ENCODE measurements at regions of chr6 and their contacts with region 1.

Region 1: GRCh38 chr6:52995913-52996645 is 995 bp upstream of the GSTA4 start:
- DNase-seq: peak; percentile 49
- H3K4me3 Mint-ChIP-seq: peak overlapping the region; percentile 95
- H3K27ac Mint-ChIP-seq: peak overlapping the region; percentile 99
- H3K4me1 Mint-ChIP-seq: peaks cover 31% of the 10 kb centered on the region
- H3K27me3 Mint-ChIP-seq: peaks cover 5% of the 10 kb centered on the region

Region 2: GRCh38 chr6:52670502-52671409 is 325.3 kb before region 1 on chr6 and contains the start of gene TMEM14A:
- CTCF ChIA-PET with region 1: no interaction called
- POLR2A ChIA-PET with region 1: no interaction called
- intact Hi-C with region 1: loop called (anchors 10 kb)
- DNase-seq: peak; percentile 95
- H3K4me3 Mint-ChIP-seq: peak within 1 kb of the TSS; percentile 84
- H3K27ac Mint-ChIP-seq: peak within 1 kb of the TSS; percentile 52
- H3K4me1 Mint-ChIP-seq: peaks cover 39% of the 10 kb centered on the region
- H3K27me3 Mint-ChIP-seq: no peaks in the 10 kb centered on the region
- total RNA-seq, gene TMEM14A: 16.8 to 19.3 TPM

Region 3: DNA sequence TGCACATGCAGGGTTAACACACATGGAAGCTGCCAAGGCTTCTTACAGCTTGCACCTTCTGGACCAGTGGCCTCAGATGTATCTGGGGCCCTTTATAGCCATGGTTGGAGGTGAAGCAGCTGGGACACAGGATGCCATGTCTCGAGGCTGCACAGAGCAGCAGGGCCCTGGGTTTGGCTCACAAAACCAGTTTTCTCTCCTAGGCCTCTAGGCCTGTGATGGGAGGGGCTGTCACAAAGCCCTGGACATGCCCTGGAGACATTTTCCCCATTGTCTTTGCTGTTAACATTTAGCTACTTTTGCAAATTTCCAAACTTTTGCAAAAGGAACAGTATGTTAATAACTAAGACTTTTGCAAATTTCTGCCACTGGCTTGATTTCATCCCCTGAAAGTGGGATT is 174.2 kb before region 1 on chr6:
- CTCF ChIA-PET with region 1: no interaction called
- POLR2A ChIA-PET with region 1: no interaction called
- intact Hi-C with region 1: no loop called
- DNase-seq: no peak
- H3K4me3 Mint-ChIP-seq: no peak overlapping the region
- H3K27ac Mint-ChIP-seq: no peak overlapping the region
- H3K4me1 Mint-ChIP-seq: no peaks in the 10 kb centered on the region
- H3K27me3 Mint-ChIP-seq: no peaks in the 10 kb centered on the region

Region 4: GRCh38 chr6:52937908-52938307 is 58.2 kb before region 1 on chr6:
- CTCF ChIA-PET with region 1: no interaction called
- POLR2A ChIA-PET with region 1: no interaction called
- intact Hi-C with region 1: no loop called
- DNase-seq: no peak
- H3K4me3 Mint-ChIP-seq: no peak overlapping the region
- H3K27ac Mint-ChIP-seq: no peak overlapping the region
- H3K4me1 Mint-ChIP-seq: no peaks in the 10 kb centered on the region
- H3K27me3 Mint-ChIP-seq: peaks cover 2% of the 10 kb centered on the region

Region 5: GRCh38 chr6:52976591-52977035 is 19.5 kb before region 1 on chr6:
- CTCF ChIA-PET with region 1: interaction called, 49 read pairs
- POLR2A ChIA-PET with region 1: interaction called, 4 read pairs
- intact Hi-C with region 1: loop called (anchors 1 kb)
- DNase-seq: peak; percentile 66
- H3K4me3 Mint-ChIP-seq: peak overlapping the region; percentile 10
- H3K27ac Mint-ChIP-seq: peak overlapping the region; percentile 84
- H3K4me1 Mint-ChIP-seq: peaks cover 43% of the 10 kb centered on the region
- H3K27me3 Mint-ChIP-seq: peaks cover 14% of the 10 kb centered on the region

Region 6: GRCh38 chr6:53064726-53065215 is 68.7 kb after region 1 on chr6:
- CTCF ChIA-PET with region 1: interaction called, 17 read pairs
- POLR2A ChIA-PET with region 1: interaction called, 3 read pairs
- intact Hi-C with region 1: no loop called
- DNase-seq: peak; percentile 98
- H3K4me3 Mint-ChIP-seq: peak overlapping the region; percentile 100
- H3K27ac Mint-ChIP-seq: peak overlapping the region; percentile 97
- H3K4me1 Mint-ChIP-seq: peaks cover 52% of the 10 kb centered on the region
- H3K27me3 Mint-ChIP-seq: no peaks in the 10 kb centered on the region

Region 7: GRCh38 chr6:53095716-53096115 is 99.6 kb after region 1 on chr6:
- CTCF ChIA-PET with region 1: no interaction called
- POLR2A ChIA-PET with region 1: no interaction called
- intact Hi-C with region 1: no loop called
- DNase-seq: no peak
- H3K4me3 Mint-ChIP-seq: no peak overlapping the region
- H3K27ac Mint-ChIP-seq: no peak overlapping the region
- H3K4me1 Mint-ChIP-seq: no peaks in the 10 kb centered on the region
- H3K27me3 Mint-ChIP-seq: no peaks in the 10 kb centered on the region

Region 8: DNA sequence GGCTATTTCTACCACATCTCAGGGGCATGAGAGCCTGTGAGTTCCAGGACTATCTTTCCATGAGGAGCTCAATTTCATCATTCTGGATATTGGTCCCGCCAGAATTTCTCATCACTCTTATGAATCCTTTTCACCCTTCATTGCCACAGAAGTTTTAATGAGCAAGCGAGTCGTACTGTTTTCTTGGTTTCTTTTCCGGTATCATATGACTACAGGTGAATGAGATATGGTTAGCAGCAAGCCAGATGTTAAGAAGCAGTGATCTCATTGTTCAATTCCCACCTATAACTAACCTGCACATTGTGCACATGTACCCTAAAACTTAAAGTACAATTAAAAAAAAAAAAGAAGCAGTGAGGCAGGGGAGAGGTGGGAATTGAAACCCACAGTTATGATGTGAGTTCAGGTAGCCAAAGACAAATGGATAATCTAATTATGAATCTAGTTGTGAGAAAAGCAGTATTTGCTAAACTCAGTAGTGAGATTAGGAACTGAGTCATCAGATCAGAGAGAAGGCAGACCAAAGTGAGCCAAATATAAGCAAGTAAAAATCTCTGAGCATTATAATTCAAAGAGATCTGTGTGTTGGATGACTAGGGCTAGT is 430.7 kb after region 1 on chr6:
- CTCF ChIA-PET with region 1: no interaction called
- POLR2A ChIA-PET with region 1: no interaction called
- intact Hi-C with region 1: loop called (anchors 10 kb)
- DNase-seq: no peak
- H3K4me3 Mint-ChIP-seq: no peak overlapping the region
- H3K27ac Mint-ChIP-seq: no peak overlapping the region
- H3K4me1 Mint-ChIP-seq: peaks cover 30% of the 10 kb centered on the region
- H3K27me3 Mint-ChIP-seq: peaks cover 11% of the 10 kb centered on the region